Vagina (tissue), 2 donors: ENCODE measurements at regions of chr19 and their contacts with region 1.

Region 1: DNA sequence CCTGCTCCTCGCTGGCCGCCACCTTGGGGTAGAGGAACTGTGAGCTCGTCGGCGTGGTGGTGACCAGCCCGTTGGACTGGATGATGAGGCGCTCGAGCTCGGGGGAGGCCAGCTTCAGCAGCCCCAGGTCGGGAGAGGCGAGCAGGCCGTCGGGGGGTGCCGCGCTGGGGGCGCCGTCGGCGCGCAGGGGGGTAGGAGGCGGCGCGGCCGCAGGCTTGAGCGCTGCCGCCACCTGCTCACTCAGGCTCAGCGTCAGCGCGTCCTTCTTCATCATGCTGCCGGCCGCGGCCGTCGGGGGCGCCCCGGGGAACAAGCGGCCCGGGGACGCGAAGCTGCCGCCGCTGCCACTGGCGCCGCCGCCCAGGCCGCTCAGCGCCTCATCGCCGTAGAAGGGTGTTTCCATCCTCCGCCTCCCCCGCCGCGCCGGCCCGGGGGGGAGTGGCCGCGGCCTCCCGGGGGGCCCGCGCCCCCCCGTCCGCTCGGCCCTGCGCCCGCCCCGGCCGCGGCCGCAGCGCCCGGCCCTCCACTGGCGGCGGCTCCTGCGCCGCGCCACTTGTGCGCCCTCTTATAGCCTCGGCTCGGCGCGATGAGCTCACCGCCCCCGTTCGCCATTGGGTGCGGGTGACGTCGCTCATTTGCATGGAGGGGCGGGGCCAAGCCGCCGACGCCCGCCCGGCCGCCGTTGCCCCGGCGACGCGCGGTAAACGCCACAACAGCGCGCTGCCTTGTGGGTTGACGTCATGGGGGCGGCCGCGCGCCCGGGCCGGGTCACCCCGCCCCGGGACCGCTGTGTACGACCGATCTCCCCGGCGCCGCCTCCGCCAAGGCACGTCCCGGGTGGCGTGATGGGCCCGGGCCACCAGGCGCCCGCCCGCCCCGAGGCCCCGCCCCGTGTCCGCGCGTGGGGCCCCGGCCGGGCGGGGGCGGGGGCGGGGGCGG is at the start of gene JUND:
- DNase-seq: peak in 1 of 2 donors; percentile 98
- H3K4me3 ChIP-seq: peak within 1 kb of the TSS; percentile 83 to 100
- H3K27ac ChIP-seq: peak within 1 kb of the TSS; percentile 100
- H3K4me1 ChIP-seq: peaks cover 35% of the 10 kb centered on the region
- H3K27me3 ChIP-seq: no peaks in the 10 kb centered on the region
- CTCF ChIP-seq: no peak
- POLR2A ChIP-seq: peak; percentile 64 to 95
- total RNA-seq, gene JUND: 531 TPM

Region 2: GRCh38 chr19:18304458-18305310 is 23.3 kb after region 1 on chr19:
- intact Hi-C with region 1: loop called (anchors 2 kb)
- DNase-seq: no peak
- H3K4me3 ChIP-seq: peak overlapping the region; percentile 41 to 45
- H3K27ac ChIP-seq: peak overlapping the region; percentile 98
- H3K4me1 ChIP-seq: peaks cover 64% of the 10 kb centered on the region
- H3K27me3 ChIP-seq: no peaks in the 10 kb centered on the region
- CTCF ChIP-seq: no peak
- POLR2A ChIP-seq: peak in 1 of 2 donors; percentile 74

Region 3: GRCh38 chr19:18322759-18323460 is 41.6 kb after region 1 on chr19 and contains the start of gene LSM4:
- intact Hi-C with region 1: loop called (anchors 1 kb)
- DNase-seq: peak in 1 of 2 donors; percentile 98
- H3K4me3 ChIP-seq: peak within 1 kb of the TSS; percentile 71 to 73
- H3K27ac ChIP-seq: peak within 1 kb of the TSS; percentile 89
- H3K4me1 ChIP-seq: peaks cover 40% of the 10 kb centered on the region
- H3K27me3 ChIP-seq: no peaks in the 10 kb centered on the region
- CTCF ChIP-seq: peak in 1 of 3 experiments; percentile 10
- POLR2A ChIP-seq: peak in 1 of 2 donors; percentile 43
- total RNA-seq, gene LSM4: 54.3 TPM

Region 4: DNA sequence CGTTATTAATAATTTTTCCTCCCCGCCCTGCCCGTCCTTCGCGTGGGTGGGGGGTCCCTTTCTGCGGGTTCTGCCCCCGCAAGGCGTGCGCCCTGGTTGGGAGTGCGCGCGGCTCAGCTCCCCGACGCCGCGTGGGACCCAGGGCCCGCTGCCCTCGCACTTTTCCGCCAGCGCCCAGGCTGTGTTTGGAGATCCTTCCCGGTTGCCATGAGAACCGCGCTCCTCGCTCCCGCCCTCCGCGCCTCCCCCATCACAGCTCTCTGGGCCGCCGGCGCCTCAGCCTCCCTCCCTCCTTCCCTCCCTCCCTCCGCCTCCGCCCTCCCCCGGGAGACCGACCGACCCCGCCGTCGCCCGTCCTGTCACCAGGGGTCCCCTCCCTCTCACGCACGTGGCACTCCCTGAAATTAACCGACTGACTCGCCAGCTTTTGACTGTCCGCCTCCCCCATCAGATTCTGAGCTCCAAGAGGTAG is 135.5 kb after region 1 on chr19:
- intact Hi-C with region 1: loop called (anchors 2 kb)
- DNase-seq: no peak
- H3K4me3 ChIP-seq: peak overlapping the region; percentile 48 to 66
- H3K27ac ChIP-seq: peak overlapping the region; percentile 97
- H3K4me1 ChIP-seq: peaks cover 71% of the 10 kb centered on the region
- H3K27me3 ChIP-seq: no peaks in the 10 kb centered on the region
- CTCF ChIP-seq: no peak
- POLR2A ChIP-seq: peak in 1 of 2 donors; percentile 15